Activated CD4-positive, alpha-beta T cell treated with anti-CD3 and anti-CD28 coated beads for 36 hours (primary cell): ENCODE measurements at regions of chr18 and their contacts with region 1.

Region 1: GRCh38 chr18:34397286-34397896 is 172.7 kb upstream of the NOL4 start:
- DNase-seq: no peak
- ATAC-seq: no peak
- H3K4me3 Mint-ChIP-seq: no peak overlapping the region
- H3K27ac Mint-ChIP-seq: no peak overlapping the region
- H3K4me1 Mint-ChIP-seq: no peaks in the 10 kb centered on the region
- H3K27me3 Mint-ChIP-seq: no peaks in the 10 kb centered on the region

Region 2: DNA sequence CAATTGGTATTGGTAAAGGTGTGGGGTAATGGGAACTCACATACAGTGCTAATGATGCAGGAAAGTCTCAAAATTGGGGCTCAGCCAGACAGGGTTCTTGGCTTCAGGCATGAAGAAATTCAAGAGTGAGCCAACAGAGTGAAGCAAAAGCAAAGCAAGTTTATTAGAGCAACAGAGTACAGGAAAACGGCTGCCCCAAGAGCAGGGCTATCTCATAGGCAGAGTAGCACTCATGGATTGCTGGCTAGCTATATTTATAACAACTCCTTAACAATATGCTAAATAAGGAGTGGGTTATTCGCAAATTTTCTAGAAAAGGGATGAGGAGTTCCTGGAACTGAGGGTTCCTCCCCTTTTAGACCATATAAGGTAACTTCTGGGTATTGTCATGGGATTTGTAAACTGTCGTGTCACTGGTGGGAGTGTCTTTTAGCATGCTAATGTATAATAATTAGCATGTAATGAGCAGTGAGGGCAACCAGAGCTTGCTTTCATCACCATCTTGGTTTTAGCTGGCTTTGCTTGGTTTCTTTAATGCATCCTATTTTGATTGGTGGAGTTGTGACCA is 61.1 kb after region 1 on chr18:
- CTCF ChIA-PET with region 1: no interaction called
- POLR2A ChIA-PET with region 1: no interaction called
- intact Hi-C with region 1: loop called in 1 of 2 experiments (anchors 10 kb)
- DNase-seq: no peak
- ATAC-seq: no peak
- H3K4me3 Mint-ChIP-seq: no peak overlapping the region
- H3K27ac Mint-ChIP-seq: no peak overlapping the region
- H3K4me1 Mint-ChIP-seq: no peaks in the 10 kb centered on the region
- H3K27me3 Mint-ChIP-seq: no peaks in the 10 kb centered on the region

Region 3: GRCh38 chr18:34985963-34986362 is 588.6 kb after region 1 on chr18:
- CTCF ChIA-PET with region 1: no interaction called
- POLR2A ChIA-PET with region 1: no interaction called
- intact Hi-C with region 1: no loop called
- DNase-seq: no peak
- ATAC-seq: peak; percentile 64
- H3K4me3 Mint-ChIP-seq: no peak overlapping the region
- H3K27ac Mint-ChIP-seq: no peak overlapping the region
- H3K4me1 Mint-ChIP-seq: no peaks in the 10 kb centered on the region
- H3K27me3 Mint-ChIP-seq: peaks cover 3% of the 10 kb centered on the region